MCF 10A (cell line): ENCODE measurements at regions of chr9 and their contacts with region 1.

Region 1: DNA sequence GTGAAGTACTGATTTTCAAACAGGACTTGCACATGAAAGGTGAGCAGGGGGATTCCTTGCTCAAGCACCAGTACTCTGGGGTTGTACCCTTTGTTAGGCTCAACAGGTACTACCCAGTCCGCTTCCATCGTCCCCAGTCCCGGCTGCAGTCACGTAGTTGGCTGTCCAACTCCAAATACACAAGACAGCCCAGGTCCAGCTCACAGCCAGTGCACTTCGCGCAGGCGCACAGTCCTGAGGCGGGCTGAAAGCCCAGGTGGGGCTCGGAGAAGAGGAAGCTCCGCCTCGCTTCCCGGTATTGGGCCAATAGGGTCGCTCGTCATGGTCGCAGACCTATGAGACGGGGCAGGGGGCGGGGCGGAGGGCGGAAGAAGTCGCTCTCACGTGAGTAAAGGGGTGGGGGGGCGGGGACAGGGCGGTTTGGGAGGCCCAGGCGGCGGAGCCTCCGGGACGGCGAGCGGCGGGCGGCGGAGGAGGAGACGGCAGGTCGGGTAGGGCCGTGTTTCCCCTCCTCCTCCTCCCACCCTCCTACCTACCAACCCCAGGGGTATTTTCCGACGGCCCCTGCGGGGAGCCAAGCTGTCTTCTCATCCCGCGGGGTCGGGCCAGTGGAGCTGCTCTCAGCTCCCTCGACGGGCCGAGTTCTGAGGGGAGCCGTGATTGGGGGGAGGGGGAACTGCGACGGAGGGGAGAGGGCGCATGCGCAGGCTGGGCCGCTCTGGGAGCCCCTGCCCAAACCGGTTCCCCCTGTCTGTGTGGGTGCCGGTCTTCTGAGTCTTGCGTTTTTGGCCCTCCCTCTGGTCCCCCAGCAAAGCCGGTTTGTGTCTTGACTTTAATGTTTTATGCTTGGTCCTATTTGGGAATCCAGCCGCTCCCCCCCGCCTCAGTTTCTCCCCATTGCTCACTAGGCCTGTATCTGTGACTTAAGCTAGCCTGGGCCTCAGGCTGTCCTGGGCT is at the start of gene RABGAP1:
- DNase-seq: peak; percentile 99
- H3K4me3 Mint-ChIP-seq: peak within 1 kb of the TSS; percentile 91
- H3K27ac Mint-ChIP-seq: peak within 1 kb of the TSS; percentile 85
- H3K4me1 Mint-ChIP-seq: peaks cover 5% of the 10 kb centered on the region
- H3K27me3 Mint-ChIP-seq: no peaks in the 10 kb centered on the region
- CTCF ChIP-seq: no peak
- total RNA-seq, gene RABGAP1: 41.1 and 43.1 TPM in 2 replicates

Region 2: GRCh38 chr9:122846371-122846940 is 94.4 kb before region 1 on chr9:
- CTCF ChIA-PET with region 1: no interaction called
- POLR2A ChIA-PET with region 1: no interaction called
- intact Hi-C with region 1: no loop called
- DNase-seq: no peak
- H3K4me3 Mint-ChIP-seq: no peak overlapping the region
- H3K27ac Mint-ChIP-seq: no peak overlapping the region
- H3K4me1 Mint-ChIP-seq: no peaks in the 10 kb centered on the region
- H3K27me3 Mint-ChIP-seq: no peaks in the 10 kb centered on the region
- CTCF ChIP-seq: no peak

Region 3: DNA sequence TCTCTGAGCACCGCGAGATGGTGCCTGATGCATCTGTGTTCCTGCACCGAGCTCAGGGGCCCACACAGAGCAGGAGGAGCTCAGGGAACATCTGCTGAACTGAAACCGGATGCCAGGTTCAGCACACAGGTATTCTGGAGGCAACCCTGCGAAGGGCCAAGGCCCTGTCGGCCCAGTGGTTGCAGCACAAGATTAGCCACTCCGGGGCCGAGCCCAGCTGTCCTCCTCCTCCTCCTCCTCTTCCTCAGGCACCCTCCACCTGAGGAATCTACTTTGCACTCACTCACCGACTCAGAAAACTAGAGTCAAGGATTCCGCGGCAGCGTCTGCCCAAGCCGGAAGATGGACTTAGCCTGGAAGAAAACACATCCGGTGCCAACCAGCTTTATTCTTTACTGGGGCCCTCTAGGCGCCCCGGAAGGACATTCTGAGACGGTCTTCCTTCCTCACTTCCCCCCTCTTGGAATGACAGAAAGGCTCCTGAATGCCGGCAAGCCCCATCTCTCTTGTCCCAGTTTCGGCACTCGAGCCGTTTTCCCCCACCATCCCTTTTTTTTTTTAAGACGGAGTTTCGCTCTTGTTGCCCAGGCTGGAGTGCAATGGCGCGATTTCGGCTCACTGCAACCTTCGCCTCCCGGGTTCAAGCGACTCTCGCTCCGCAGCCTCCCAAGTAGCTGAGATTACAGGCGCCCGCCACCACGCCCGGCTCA is 27.8 kb before region 1 on chr9 and contains the start of gene ZBTB6:
- CTCF ChIA-PET with region 1: interaction called, 3 read pairs
- POLR2A ChIA-PET with region 1: interaction called, 67 read pairs
- intact Hi-C with region 1: no loop called
- DNase-seq: peak; percentile 89
- H3K4me3 Mint-ChIP-seq: peak within 1 kb of the TSS; percentile 97
- H3K27ac Mint-ChIP-seq: peak within 1 kb of the TSS; percentile 94
- H3K4me1 Mint-ChIP-seq: peaks cover 17% of the 10 kb centered on the region
- H3K27me3 Mint-ChIP-seq: no peaks in the 10 kb centered on the region
- CTCF ChIP-seq: no peak
- total RNA-seq, gene ZBTB6: 8.5 and 10.4 TPM in 2 replicates

Region 4: GRCh38 chr9:122954253-122954691 is 13.4 kb after region 1 on chr9:
- CTCF ChIA-PET with region 1: interaction called, 3 read pairs
- POLR2A ChIA-PET with region 1: interaction called, 50 read pairs
- intact Hi-C with region 1: no loop called
- DNase-seq: peak; percentile 44
- H3K4me3 Mint-ChIP-seq: peak overlapping the region; percentile 33
- H3K27ac Mint-ChIP-seq: peak overlapping the region; percentile 76
- H3K4me1 Mint-ChIP-seq: peaks cover 30% of the 10 kb centered on the region
- H3K27me3 Mint-ChIP-seq: no peaks in the 10 kb centered on the region
- CTCF ChIP-seq: no peak